B cell (primary cell): ENCODE measurements at regions of chr17 and their contacts with region 1.

Region 1: DNA sequence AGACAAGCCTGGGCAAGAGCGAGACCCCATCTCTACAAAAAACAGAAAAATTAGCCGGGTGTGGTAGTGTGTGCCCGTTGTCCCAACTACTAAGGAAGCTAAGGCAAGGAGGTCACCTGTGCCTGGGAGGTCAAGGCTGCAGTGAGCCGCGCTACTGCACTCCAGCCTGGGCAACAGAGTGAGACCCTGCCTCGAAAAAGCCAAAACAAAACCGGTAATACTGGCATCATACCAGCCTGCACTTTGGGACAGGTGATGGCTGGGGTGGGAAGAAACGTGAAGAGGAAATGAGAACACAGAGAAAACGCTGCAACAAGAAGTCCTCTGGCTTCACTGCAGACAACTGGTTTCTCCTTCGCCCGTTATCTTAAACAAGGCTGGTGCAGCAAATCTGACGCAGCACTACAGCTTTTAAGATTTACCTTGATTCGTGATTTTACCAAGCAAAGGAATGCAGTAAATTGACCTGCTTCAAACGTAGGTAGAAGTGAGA is 725 bp upstream of the CASC3 start:
- DNase-seq: no peak
- ATAC-seq: peak; percentile 1
- H3K4me3 ChIP-seq: peak overlapping the region; percentile 74 to 93 (median 84)
- H3K4me3 Mint-ChIP-seq: peak overlapping the region; percentile 94
- H3K27ac ChIP-seq: peak overlapping the region; percentile 94 to 95
- H3K27ac Mint-ChIP-seq: peak overlapping the region; percentile 98
- H3K4me1 ChIP-seq: peaks cover 19 to 24% of the 10 kb centered on the region in 2 donors
- H3K4me1 Mint-ChIP-seq: peaks cover 23% of the 10 kb centered on the region
- H3K27me3 ChIP-seq: no peaks in the 10 kb centered on the region
- H3K27me3 Mint-ChIP-seq: no peaks in the 10 kb centered on the region
- CTCF ChIP-seq: no peak

Region 2: DNA sequence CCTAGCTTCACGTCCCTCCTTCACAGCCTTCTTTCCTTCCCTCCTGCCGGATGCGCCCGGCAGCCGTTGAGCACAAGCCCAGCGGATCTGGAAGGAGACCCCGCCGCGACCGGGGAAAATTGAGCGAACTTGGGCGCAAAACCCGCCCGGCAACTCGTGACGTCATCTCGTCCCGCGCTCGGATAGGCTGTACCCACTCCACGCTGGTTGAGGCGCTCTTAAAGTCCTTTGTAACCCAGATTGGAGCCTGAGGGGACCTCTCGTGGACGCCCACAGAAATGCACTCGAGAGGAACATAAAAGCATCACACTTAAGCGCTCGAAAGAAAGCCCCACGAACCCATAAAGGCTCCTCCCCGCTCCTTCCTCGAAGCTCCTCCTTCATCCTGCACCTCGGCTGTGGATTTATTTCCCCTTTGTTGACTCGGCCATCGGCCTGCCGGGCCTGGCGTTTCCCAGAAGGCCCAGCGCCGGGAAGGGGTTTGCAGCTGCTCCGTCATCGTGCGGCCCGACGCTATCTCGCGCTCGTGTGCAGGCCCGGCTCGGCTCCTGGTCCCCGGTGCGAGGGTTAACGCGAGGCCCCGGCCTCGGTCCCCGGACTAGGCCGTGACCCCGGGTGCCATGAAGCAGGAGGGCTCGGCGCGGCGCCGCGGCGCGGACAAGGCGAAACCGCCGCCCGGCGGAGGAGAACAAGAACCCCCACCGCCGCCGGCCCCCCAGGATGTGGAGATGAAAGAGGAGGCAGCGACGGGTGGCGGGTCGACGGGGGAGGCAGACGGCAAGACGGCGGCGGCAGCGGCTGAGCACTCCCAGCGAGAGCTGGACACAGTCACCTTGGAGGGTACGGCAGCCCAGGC is 159.0 kb before region 1 on chr17 and contains the start of gene PSMD3:
- CTCF ChIA-PET with region 1: no interaction called
- POLR2A ChIA-PET with region 1: no interaction called
- intact Hi-C with region 1: no loop called
- DNase-seq: peak; percentile 100
- ATAC-seq: peak; percentile 92
- H3K4me3 ChIP-seq: peak within 1 kb of the TSS; percentile 76 to 93 (median 91)
- H3K4me3 Mint-ChIP-seq: peak within 1 kb of the TSS; percentile 96
- H3K27ac ChIP-seq: peak within 1 kb of the TSS; percentile 92 to 97
- H3K27ac Mint-ChIP-seq: peak within 1 kb of the TSS; percentile 95
- H3K4me1 ChIP-seq: peaks cover 25 to 26% of the 10 kb centered on the region in 2 donors
- H3K4me1 Mint-ChIP-seq: peaks cover 38% of the 10 kb centered on the region
- H3K27me3 ChIP-seq: no peaks in the 10 kb centered on the region
- H3K27me3 Mint-ChIP-seq: no peaks in the 10 kb centered on the region
- CTCF ChIP-seq: peak; percentile 76
- total RNA-seq, gene PSMD3: 69.4 and 76.6 TPM in 2 replicates

Region 3: GRCh38 chr17:40098846-40099618 is 40.6 kb before region 1 on chr17:
- CTCF ChIA-PET with region 1: interaction called, 6 read pairs
- POLR2A ChIA-PET with region 1: interaction called, 12 read pairs
- intact Hi-C with region 1: loop called (anchors 1 kb)
- DNase-seq: peak; percentile 98
- ATAC-seq: peak; percentile 64
- H3K4me3 ChIP-seq: peak overlapping the region; percentile 51 to 91 (median 78)
- H3K4me3 Mint-ChIP-seq: peak overlapping the region; percentile 77
- H3K27ac ChIP-seq: peak overlapping the region; percentile 92 to 93
- H3K27ac Mint-ChIP-seq: peak overlapping the region; percentile 89
- H3K4me1 ChIP-seq: peaks cover 53 to 70% of the 10 kb centered on the region in 2 donors
- H3K4me1 Mint-ChIP-seq: peaks cover 74% of the 10 kb centered on the region
- H3K27me3 ChIP-seq: no peaks in the 10 kb centered on the region
- H3K27me3 Mint-ChIP-seq: no peaks in the 10 kb centered on the region
- CTCF ChIP-seq: no peak

Region 4: DNA sequence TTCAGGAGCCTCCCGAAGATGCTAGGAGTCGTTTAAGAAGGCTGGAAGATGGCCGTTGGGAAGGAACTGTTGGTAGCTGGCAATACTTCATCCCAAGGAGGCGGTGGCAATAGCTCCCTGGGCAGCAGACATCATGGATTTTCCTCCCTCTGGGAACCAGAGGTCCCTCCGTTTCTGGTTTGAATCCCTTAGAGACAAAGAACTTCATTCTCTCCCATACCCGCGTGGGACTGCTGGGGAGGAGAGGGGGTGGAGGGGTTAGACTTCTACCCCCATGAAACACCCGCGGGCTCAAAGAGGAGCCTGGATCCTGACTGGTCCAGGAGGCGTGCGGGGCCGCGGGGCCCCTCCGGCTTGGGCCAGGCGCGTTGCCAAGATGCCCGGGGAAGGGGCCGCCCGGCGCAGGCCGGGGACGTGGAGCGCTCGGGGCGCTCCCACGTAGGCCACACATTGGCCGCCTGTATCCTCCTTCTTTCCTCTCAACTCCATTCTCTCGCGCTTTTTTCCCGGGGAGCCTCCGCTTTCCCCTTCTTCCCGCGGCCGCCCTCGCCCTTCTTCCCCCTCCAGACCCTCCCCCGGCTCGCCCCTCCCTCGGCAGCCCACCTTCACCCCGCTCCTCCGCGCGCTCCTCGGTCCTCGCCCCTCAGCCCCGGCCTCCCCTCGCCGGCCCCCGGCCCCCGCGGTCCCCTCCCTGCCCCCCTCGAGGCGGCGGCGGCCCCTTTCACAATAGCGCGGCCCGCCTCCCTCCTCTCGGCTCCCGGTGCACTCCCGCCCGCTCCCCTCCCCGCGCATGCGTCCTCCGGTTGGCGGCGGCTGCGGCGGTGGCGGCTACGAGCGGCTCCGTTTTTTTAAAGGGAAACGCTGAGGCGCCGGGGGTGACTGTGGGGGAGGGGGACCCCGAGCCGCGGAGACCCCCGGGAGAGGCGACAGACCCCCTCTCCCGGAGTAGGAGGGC is 18.2 kb before region 1 on chr17 and contains the start of gene MSL1:
- CTCF ChIA-PET with region 1: interaction called, 43 read pairs
- POLR2A ChIA-PET with region 1: interaction called, 56 read pairs
- intact Hi-C with region 1: loop called (anchors 1 kb)
- DNase-seq: peak; percentile 90
- ATAC-seq: peak; percentile 71
- H3K4me3 ChIP-seq: peak within 1 kb of the TSS; percentile 50 to 81 (median 77)
- H3K4me3 Mint-ChIP-seq: peak within 1 kb of the TSS; percentile 86
- H3K27ac ChIP-seq: peak within 1 kb of the TSS; percentile 55 to 79
- H3K27ac Mint-ChIP-seq: peak within 1 kb of the TSS; percentile 82
- H3K4me1 ChIP-seq: peaks cover 21 to 23% of the 10 kb centered on the region in 2 donors
- H3K4me1 Mint-ChIP-seq: peaks cover 32% of the 10 kb centered on the region
- H3K27me3 ChIP-seq: no peaks in the 10 kb centered on the region
- H3K27me3 Mint-ChIP-seq: no peaks in the 10 kb centered on the region
- CTCF ChIP-seq: no peak
- total RNA-seq, gene MSL1: 125 and 129 TPM in 2 replicates

Region 5: DNA sequence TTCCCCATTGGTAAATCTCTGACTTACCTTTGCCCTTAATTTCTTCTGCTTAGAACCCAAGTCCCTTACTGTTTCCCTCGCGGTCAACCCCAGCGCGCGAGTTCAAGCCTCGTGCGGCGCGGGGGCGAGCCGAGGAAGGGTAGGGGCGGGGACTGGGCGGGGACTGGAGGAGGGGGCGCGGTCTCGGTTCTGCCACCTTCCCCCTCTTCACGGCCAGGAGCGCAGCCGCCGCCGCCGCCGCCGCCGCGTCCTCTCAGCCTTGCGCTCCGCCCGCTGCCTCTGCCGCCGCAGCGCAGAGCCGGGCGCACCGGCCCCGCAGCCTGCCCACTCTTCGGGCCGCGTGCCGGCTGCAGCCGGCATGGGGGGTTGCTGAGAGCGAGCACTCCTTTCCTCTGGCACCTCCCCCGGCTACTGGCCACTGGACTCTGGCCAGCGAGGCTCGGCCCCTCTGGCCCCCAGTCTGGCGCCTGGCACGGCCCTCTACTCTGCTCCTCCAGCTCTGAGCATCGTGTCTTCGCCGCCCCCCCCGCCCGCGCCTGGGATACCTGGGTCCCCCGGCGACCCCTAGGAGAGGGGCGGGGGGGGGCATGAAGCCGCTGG is 37.8 kb after region 1 on chr17 and contains the start of gene RAPGEFL1:
- CTCF ChIA-PET with region 1: no interaction called
- POLR2A ChIA-PET with region 1: interaction called, 4 read pairs
- intact Hi-C with region 1: loop called (anchors 2 kb)
- DNase-seq: peak; percentile 88
- ATAC-seq: peak; percentile 99
- H3K4me3 ChIP-seq: peak within 1 kb of the TSS in 4 of 5 experiments; percentile 42 to 66 (median 59)
- H3K4me3 Mint-ChIP-seq: peak within 1 kb of the TSS; percentile 77
- H3K27ac ChIP-seq: no peak within 1 kb of the TSS
- H3K27ac Mint-ChIP-seq: no peak within 1 kb of the TSS
- H3K4me1 ChIP-seq: peaks cover 17% of the 10 kb centered on the region in 2 donors
- H3K4me1 Mint-ChIP-seq: peaks cover 11% of the 10 kb centered on the region
- H3K27me3 ChIP-seq: peaks cover 0 to 7% (median 2%) of the 10 kb centered on the region in 4 experiments
- H3K27me3 Mint-ChIP-seq: no peaks in the 10 kb centered on the region
- CTCF ChIP-seq: no peak
- total RNA-seq, gene RAPGEFL1: 5.4 and 5.6 TPM in 2 replicates